ENCODE measurements at regions of chr3 and their contacts with region 1.

Region 1: GRCh38 chr3:66828303-66828702 is 169.8 kb upstream of the KBTBD8 start:
- DNase-seq: no peak
- ATAC-seq: no peak
- H3K4me3 ChIP-seq: no peak overlapping the region
- H3K4me1 ChIP-seq: peaks cover 16% of the 10 kb centered on the region
- CTCF ChIP-seq: no peak

Region 2: DNA sequence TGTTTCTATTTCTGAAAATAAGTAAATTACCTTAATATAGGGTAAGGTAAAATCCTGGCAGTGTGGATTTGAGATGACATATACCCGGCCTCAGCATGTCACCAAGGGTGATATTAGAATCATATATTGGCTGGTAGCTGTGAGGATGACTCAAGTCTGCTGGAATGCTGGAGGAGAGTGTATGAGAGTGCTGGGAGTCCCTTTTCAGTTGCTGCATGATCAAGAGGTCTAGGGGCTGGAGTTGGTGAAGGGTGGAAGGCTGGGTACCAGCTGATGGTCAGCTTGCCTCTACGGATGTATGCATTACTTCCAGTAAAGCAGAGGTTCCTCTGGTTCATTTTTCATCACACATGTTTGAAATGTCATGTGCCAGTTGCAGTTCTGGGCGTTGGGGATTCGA is 566.9 kb before region 1 on chr3:
- intact Hi-C with region 1: loop called (anchors 5 to 10 kb)
- DNase-seq: no peak
- ATAC-seq: no peak
- H3K4me3 ChIP-seq: no peak overlapping the region
- H3K4me1 ChIP-seq: no peaks in the 10 kb centered on the region
- CTCF ChIP-seq: no peak